WTC11 (cell line): ENCODE measurements at regions of chr13 and their contacts with region 1.

Region 1: GRCh38 chr13:26698392-26699196 is 62.0 kb downstream of the GPR12 start:
- DNase-seq: peak; percentile 88
- ATAC-seq: peak; percentile 75
- H3K4me3 Mint-ChIP-seq: peak overlapping the region; percentile 46
- H3K27ac Mint-ChIP-seq: no peak overlapping the region
- H3K4me1 Mint-ChIP-seq: peaks cover 15% of the 10 kb centered on the region
- H3K27me3 Mint-ChIP-seq: peaks cover 6% of the 10 kb centered on the region; the same call in 1 of the 2 replicates
- CTCF ChIP-seq: peak; percentile 99

Region 2: GRCh38 chr13:26186118-26186870 is 512.3 kb before region 1 on chr13:
- CTCF ChIA-PET with region 1: interaction called, 134 read pairs
- POLR2A ChIA-PET with region 1: interaction called, 5 read pairs
- DNase-seq: peak; percentile 93
- ATAC-seq: peak; percentile 98
- H3K4me3 Mint-ChIP-seq: peak overlapping the region; percentile 87
- H3K27ac Mint-ChIP-seq: no peak overlapping the region
- H3K4me1 Mint-ChIP-seq: peaks cover 5% of the 10 kb centered on the region
- H3K27me3 Mint-ChIP-seq: peaks cover 8% of the 10 kb centered on the region; the same call in 1 of the 2 replicates
- CTCF ChIP-seq: 0 out of 2 replicates have a peak, but pooled peaks have one; percentile 17

Region 3: GRCh38 chr13:26425443-26426358 is 272.9 kb before region 1 on chr13:
- CTCF ChIA-PET with region 1: interaction called, 18 read pairs
- POLR2A ChIA-PET with region 1: no interaction called
- DNase-seq: no peak
- ATAC-seq: no peak
- H3K4me3 Mint-ChIP-seq: no peak overlapping the region
- H3K27ac Mint-ChIP-seq: no peak overlapping the region
- H3K4me1 Mint-ChIP-seq: peaks cover 2% of the 10 kb centered on the region; the same call in 1 of the 2 replicates
- H3K27me3 Mint-ChIP-seq: no peaks in the 10 kb centered on the region
- CTCF ChIP-seq: no peak

Region 4: GRCh38 chr13:26482451-26483197 is 216.0 kb before region 1 on chr13:
- CTCF ChIA-PET with region 1: interaction called, 11 read pairs
- POLR2A ChIA-PET with region 1: no interaction called
- DNase-seq: peak; percentile 74
- ATAC-seq: peak; percentile 68
- H3K4me3 Mint-ChIP-seq: no peak overlapping the region
- H3K27ac Mint-ChIP-seq: no peak overlapping the region
- H3K4me1 Mint-ChIP-seq: peaks cover 24% of the 10 kb centered on the region
- H3K27me3 Mint-ChIP-seq: no peaks in the 10 kb centered on the region
- CTCF ChIP-seq: peak; percentile 89

Region 5: GRCh38 chr13:26518451-26518959 is 180.1 kb before region 1 on chr13:
- CTCF ChIA-PET with region 1: interaction called, 19 read pairs
- POLR2A ChIA-PET with region 1: no interaction called
- DNase-seq: no peak
- ATAC-seq: peak; percentile 70
- H3K4me3 Mint-ChIP-seq: peak overlapping the region; percentile 34; the same call in 1 of the 2 replicates
- H3K27ac Mint-ChIP-seq: peak overlapping the region; percentile 92
- H3K4me1 Mint-ChIP-seq: peaks cover 35% of the 10 kb centered on the region
- H3K27me3 Mint-ChIP-seq: no peaks in the 10 kb centered on the region
- CTCF ChIP-seq: no peak

Region 6: DNA sequence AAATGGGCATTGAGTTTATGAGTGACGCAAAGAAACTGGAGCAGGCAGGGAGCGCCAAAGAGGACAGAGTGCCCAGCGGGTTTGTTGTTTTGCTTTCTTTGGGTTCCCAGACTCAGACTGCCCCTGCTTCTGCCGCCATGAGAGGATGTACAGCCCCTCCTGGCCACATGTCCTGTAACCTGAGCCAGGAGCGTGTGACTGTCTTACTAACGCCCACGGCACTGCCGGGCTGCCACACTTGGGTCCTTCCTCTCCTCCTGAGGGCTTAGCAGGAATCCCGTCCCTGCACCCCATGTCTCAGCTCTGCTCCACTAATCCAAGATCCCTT is 18.5 kb before region 1 on chr13:
- CTCF ChIA-PET with region 1: interaction called, 16 read pairs
- POLR2A ChIA-PET with region 1: no interaction called
- DNase-seq: peak; percentile 38
- ATAC-seq: peak; percentile 90
- H3K4me3 Mint-ChIP-seq: no peak overlapping the region
- H3K27ac Mint-ChIP-seq: peak overlapping the region; percentile 55
- H3K4me1 Mint-ChIP-seq: peaks cover 27% of the 10 kb centered on the region
- H3K27me3 Mint-ChIP-seq: no peaks in the 10 kb centered on the region
- CTCF ChIP-seq: no peak

Region 7: DNA sequence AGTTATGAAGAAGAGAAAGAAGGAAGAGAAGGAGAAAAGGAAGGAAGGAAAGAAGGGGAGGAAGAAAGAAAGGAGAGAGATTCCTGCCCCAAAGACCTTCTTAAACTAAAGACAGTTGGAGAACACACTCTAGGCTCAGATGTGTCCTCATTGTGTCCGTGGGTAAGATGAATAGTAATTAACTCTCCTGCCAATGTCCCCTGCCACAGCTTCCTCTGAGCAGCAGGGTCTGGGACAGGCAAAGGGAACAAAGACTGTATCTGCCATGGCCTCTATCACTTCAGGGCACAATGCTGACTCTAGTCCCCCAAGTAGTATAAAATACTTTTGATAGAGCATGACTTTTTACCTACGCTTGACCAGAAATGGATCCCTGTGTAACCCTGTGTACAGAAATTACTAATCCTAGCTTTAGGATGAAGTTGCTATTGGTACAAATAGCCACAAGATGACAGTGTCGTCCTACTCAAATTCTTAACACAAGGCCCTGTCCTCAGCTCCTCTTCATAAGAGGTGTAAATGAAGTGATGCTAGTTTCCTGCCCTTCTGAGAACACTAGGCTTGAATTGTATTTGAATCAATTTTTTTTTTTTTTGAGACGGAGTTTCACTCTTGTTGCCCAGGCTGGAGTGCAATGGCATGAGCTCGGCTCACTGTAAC is 248.2 kb after region 1 on chr13:
- CTCF ChIA-PET with region 1: interaction called, 10 read pairs
- POLR2A ChIA-PET with region 1: no interaction called
- DNase-seq: no peak
- ATAC-seq: peak; percentile 72
- H3K4me3 Mint-ChIP-seq: no peak overlapping the region
- H3K27ac Mint-ChIP-seq: no peak overlapping the region
- H3K4me1 Mint-ChIP-seq: peaks cover 5% of the 10 kb centered on the region
- H3K27me3 Mint-ChIP-seq: no peaks in the 10 kb centered on the region
- CTCF ChIP-seq: no peak; the same call in 1 of the 2 replicates